GM12878 (cell line): ENCODE measurements at regions of chr15 and their contacts with region 1.

Region 1: DNA sequence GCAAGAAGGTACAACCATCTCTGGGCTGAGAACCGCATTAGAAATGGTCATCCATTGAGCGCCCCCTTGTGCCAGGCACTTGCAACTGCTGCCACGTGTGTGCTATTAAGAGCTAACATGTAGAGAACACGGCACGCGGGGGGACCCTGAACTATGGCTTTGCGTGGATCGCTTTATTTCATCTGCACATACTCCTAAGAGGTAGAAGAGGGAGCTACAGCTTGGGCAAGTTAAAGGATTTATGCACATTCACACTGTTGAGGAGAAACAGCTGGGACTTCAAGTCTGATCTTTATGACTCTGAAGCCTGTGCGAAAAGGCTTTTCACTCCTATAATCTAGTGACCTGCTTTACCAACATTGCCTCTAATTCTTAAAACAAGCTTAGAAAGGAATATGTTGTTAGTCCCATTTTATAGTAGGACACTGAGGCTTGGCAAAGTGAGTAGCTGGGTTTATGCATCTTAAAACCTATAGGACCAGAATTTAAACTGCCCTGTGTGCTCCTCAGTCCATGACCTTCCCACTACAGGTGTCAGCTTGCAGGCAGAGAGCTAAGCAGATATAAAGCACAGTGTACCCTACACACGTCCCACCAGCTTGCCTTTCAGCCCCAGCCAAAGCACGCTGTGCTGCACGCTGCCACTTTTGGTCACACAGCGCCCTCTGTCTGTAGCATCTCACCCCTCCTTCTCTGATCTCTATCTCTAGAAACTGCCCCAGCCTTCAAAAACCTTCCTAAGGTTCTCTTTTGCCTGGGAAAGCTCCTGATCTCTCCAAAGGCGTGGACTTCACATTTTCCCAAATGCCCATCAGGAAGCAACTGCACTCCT is 57.8 kb downstream of the STARD5 start:
- DNase-seq: no peak
- ATAC-seq: peak; percentile 97
- H3K4me3 ChIP-seq: no peak overlapping the region
- H3K27ac ChIP-seq: no peak overlapping the region
- H3K4me1 ChIP-seq: peaks cover 22% of the 10 kb centered on the region
- H3K27me3 ChIP-seq: no peaks in the 10 kb centered on the region; a peak in 1 of 4 replicates
- CTCF ChIP-seq: peak; percentile 93 to 94 (median 94)
- EP300 ChIP-seq: no peak
- POLR2A ChIP-seq: no peak
- RAD21 ChIP-seq: peak; percentile 92

Region 2: GRCh38 chr15:80776420-80777045 is 489.6 kb before region 1 on chr15:
- CTCF ChIA-PET with region 1: interaction called, 14 read pairs
- POLR2A ChIA-PET with region 1: no interaction called
- RAD21 ChIA-PET with region 1: interaction called, 4 read pairs
- SMC1A ChIA-PET with region 1: interaction called, 6 read pairs
- in situ Hi-C with region 1: no loop called
- intact Hi-C with region 1: no loop called
- DNase-seq: no peak
- ATAC-seq: peak; percentile 72
- H3K4me3 ChIP-seq: no peak overlapping the region
- H3K27ac ChIP-seq: no peak overlapping the region
- H3K4me1 ChIP-seq: no peaks in the 10 kb centered on the region
- H3K27me3 ChIP-seq: peaks cover 18 to 19% of the 10 kb centered on the region in 2 experiments
- CTCF ChIP-seq: peak; percentile 86 to 94 (median 89)
- EP300 ChIP-seq: no peak
- POLR2A ChIP-seq: no peak
- RAD21 ChIP-seq: peak; percentile 93

Region 3: DNA sequence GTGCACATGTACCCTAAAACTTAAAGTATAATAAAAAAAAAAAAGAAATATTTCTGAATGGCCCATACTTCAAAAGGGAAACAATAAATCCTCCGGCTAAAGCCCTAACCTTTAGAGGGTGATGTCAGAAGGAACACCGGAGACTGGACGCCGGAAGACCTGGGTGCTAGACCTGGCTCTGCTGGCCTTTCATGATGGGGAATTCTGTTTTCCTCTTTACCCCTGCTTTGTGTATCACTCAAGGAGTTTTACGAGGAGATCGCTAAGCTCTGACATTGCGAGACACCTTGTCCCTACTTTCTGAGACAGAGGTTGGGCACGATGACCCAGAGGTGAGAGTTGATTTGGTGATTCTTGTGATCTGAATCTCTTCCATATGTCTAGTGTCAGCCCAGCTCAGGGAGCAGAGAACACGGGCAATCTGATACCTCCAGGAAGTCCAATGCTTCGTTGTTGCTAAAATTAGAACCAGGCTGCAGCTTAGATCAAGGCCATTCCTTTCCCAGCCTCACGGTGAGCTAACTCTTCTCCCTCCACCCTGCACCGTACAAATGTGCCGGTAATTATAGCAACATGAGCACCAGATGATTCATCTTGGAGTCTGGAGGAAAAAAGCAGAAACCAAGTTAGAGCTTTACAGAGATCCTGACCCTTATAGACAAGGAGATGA is 174.1 kb before region 1 on chr15:
- CTCF ChIA-PET with region 1: interaction called, 15 read pairs
- POLR2A ChIA-PET with region 1: no interaction called
- RAD21 ChIA-PET with region 1: interaction called, 3 read pairs
- SMC1A ChIA-PET with region 1: interaction called, 6 read pairs
- in situ Hi-C with region 1: no loop called
- intact Hi-C with region 1: no loop called
- DNase-seq: no peak
- ATAC-seq: no peak
- H3K4me3 ChIP-seq: no peak overlapping the region
- H3K27ac ChIP-seq: no peak overlapping the region
- H3K4me1 ChIP-seq: no peaks in the 10 kb centered on the region
- H3K27me3 ChIP-seq: peaks cover 0 to 4% of the 10 kb centered on the region in 2 experiments
- CTCF ChIP-seq: no peak
- EP300 ChIP-seq: no peak
- POLR2A ChIP-seq: no peak
- RAD21 ChIP-seq: no peak

Region 4: DNA sequence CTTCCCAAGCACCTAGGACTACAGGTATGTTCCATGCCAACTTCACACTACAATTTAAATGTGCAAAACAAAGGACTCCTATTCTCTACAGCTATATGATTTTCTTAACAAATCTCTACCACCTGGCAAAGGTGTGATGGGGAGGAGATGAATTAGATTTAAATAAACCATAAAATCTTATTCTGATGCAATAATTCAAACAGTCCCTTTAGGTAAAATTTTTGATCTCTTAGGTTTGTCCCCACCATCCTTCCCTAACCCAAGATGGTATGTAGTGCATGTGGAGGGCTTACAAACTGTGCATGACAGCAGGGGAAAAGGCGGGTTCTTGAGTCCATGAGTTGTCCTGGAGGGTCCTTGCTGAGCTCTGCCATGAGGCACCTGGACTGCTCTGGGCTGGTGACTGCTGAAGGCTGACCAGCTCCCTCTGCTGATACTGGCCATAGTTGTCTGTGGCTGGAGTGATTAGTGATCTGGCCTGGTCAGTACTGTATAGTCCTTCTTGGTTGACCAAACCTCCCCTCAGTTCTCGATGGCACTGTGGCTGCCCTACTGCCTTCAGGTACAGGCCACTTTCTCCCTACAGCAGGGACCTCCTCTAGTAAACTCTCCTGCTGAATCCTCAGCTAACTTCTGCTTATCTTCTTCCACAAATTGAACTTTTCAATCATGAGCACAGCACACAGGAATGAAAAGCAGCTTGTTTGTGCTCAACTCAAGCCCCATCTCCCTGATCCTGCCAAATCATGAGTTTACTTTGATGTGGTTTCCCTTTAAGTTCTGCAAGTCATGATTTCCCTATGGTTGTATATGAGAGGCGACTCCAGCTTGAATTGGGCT is 102.0 kb before region 1 on chr15:
- CTCF ChIA-PET with region 1: interaction called, 23 read pairs
- POLR2A ChIA-PET with region 1: interaction called, 3 read pairs
- RAD21 ChIA-PET with region 1: interaction called, 6 read pairs
- SMC1A ChIA-PET with region 1: interaction called, 4 read pairs
- in situ Hi-C with region 1: loop called (anchors 5 kb)
- intact Hi-C with region 1: no loop called
- DNase-seq: no peak
- ATAC-seq: peak; percentile 44; the same call in 2 of the 3 replicates
- H3K4me3 ChIP-seq: no peak overlapping the region
- H3K27ac ChIP-seq: no peak overlapping the region
- H3K4me1 ChIP-seq: peaks cover 3% of the 10 kb centered on the region
- H3K27me3 ChIP-seq: no peaks in the 10 kb centered on the region; a peak in 1 of 4 replicates
- CTCF ChIP-seq: no peak
- EP300 ChIP-seq: no peak
- POLR2A ChIP-seq: no peak
- RAD21 ChIP-seq: no peak

Region 5: DNA sequence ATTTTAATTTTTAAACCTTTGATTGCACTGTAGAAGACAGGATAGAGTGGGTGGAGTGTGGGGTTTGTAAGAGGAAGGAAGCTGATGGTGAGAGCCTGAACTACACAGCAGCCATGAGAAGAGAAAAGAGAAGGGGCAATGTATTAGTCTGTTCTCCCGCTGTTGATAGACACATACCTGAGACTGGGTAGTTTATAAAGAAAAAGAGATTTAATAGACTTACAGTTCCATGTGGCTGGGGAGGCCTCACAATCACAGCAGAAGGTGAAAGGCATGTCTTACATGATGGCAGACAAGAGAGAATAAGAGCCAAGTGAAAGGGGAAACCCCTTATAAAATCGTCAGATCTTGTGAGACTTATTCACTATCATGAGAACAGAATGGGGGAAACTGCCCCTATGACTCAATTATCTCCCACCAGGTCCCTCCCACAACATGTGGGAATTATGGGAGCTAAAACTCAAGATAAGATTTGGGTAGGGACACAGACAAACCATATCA is 20.5 kb after region 1 on chr15:
- CTCF ChIA-PET with region 1: interaction called, 22 read pairs
- POLR2A ChIA-PET with region 1: no interaction called
- RAD21 ChIA-PET with region 1: interaction called, 17 read pairs
- SMC1A ChIA-PET with region 1: interaction called, 23 read pairs
- in situ Hi-C with region 1: no loop called
- intact Hi-C with region 1: no loop called
- DNase-seq: no peak
- ATAC-seq: peak; percentile 33
- H3K4me3 ChIP-seq: no peak overlapping the region
- H3K27ac ChIP-seq: peak overlapping the region; percentile 29; the same call in 1 of the 2 replicates
- H3K4me1 ChIP-seq: peaks cover 38% of the 10 kb centered on the region
- H3K27me3 ChIP-seq: no peaks in the 10 kb centered on the region
- CTCF ChIP-seq: no peak
- EP300 ChIP-seq: no peak
- POLR2A ChIP-seq: no peak
- RAD21 ChIP-seq: no peak

Region 6: GRCh38 chr15:81330366-81331090 is 64.4 kb after region 1 on chr15:
- CTCF ChIA-PET with region 1: interaction called, 242 read pairs
- POLR2A ChIA-PET with region 1: no interaction called
- RAD21 ChIA-PET with region 1: interaction called, 9 read pairs
- SMC1A ChIA-PET with region 1: interaction called, 32 read pairs
- in situ Hi-C with region 1: no loop called
- intact Hi-C with region 1: no loop called
- DNase-seq: no peak
- ATAC-seq: no peak
- H3K4me3 ChIP-seq: no peak overlapping the region
- H3K27ac ChIP-seq: no peak overlapping the region
- H3K4me1 ChIP-seq: no peaks in the 10 kb centered on the region
- H3K27me3 ChIP-seq: no peaks in the 10 kb centered on the region
- CTCF ChIP-seq: no peak
- EP300 ChIP-seq: no peak
- POLR2A ChIP-seq: no peak
- RAD21 ChIP-seq: no peak

Region 7: GRCh38 chr15:81400640-81401236 is 134.6 kb after region 1 on chr15:
- CTCF ChIA-PET with region 1: interaction called, 29 read pairs
- POLR2A ChIA-PET with region 1: no interaction called
- RAD21 ChIA-PET with region 1: interaction called, 20 read pairs
- SMC1A ChIA-PET with region 1: interaction called, 32 read pairs
- in situ Hi-C with region 1: loop called (anchors 5 kb)
- intact Hi-C with region 1: loop called (anchors 2 kb)
- DNase-seq: peak; percentile 23
- ATAC-seq: peak; percentile 73
- H3K4me3 ChIP-seq: no peak overlapping the region
- H3K27ac ChIP-seq: no peak overlapping the region
- H3K4me1 ChIP-seq: no peaks in the 10 kb centered on the region
- H3K27me3 ChIP-seq: no peaks in the 10 kb centered on the region; a peak in 1 of 4 replicates
- CTCF ChIP-seq: peak; percentile 70 to 77 (median 73)
- EP300 ChIP-seq: no peak
- POLR2A ChIP-seq: no peak
- RAD21 ChIP-seq: peak; percentile 91

Region 8: GRCh38 chr15:81562986-81563385 is 296.8 kb after region 1 on chr15:
- CTCF ChIA-PET with region 1: no interaction called
- POLR2A ChIA-PET with region 1: no interaction called
- RAD21 ChIA-PET with region 1: no interaction called
- SMC1A ChIA-PET with region 1: no interaction called
- in situ Hi-C with region 1: no loop called
- intact Hi-C with region 1: no loop called
- DNase-seq: no peak
- ATAC-seq: no peak
- H3K4me3 ChIP-seq: no peak overlapping the region
- H3K27ac ChIP-seq: no peak overlapping the region
- H3K4me1 ChIP-seq: no peaks in the 10 kb centered on the region
- H3K27me3 ChIP-seq: no peaks in the 10 kb centered on the region; a peak in 1 of 4 replicates
- CTCF ChIP-seq: no peak
- EP300 ChIP-seq: no peak
- POLR2A ChIP-seq: no peak
- RAD21 ChIP-seq: no peak